Endothelial cell of umbilical vein (primary cell): ENCODE measurements at regions of chr1 and their contacts with region 1.

Region 1: DNA sequence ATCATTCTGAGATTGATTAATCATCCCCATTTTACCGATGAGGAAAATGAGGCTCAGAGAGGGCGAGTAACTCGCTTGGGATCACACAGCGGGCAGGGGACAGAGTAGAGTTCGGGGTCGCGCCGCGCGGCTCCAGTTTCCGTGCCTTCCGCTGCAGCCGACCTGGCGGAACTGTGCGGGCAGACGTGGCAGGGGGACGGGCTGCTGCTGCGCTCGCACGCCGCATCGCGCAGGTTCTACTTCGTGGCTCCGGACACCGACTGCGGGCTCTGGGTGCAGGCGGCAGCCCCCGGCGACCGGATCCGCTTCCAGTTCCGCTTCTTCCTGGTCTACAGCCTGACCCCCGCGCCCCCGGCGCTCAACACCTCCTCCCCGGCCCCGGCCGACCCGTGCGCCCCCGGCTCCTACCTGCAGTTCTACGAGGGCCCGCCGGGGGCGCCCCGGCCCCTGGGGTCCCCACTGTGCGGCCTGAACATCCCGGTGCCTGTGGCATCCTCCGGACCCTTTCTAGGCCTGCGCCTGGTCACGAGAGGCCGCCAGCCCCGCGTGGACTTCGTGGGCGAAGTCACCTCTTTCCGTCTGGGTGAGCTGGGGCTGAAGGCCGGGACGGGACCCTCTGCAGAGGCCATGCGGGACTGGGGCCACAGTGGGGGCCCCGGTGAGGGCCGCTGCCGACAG is 2.3 kb downstream of the LDLRAD2 start:
- DNase-seq: no peak
- H3K4me3 ChIP-seq: no peak overlapping the region
- H3K27ac ChIP-seq: no peak overlapping the region
- H3K4me1 ChIP-seq: peaks cover 29% of the 10 kb centered on the region
- H3K27me3 ChIP-seq: no peaks in the 10 kb centered on the region
- CTCF ChIP-seq: peak; percentile 48 to 71
- POLR2A ChIP-seq: no peak

Region 2: GRCh38 chr1:21703318-21703963 is 110.9 kb before region 1 on chr1:
- CTCF ChIA-PET with region 1: interaction called, 3 read pairs
- POLR2A ChIA-PET with region 1: interaction called, 5 read pairs
- dilution Hi-C with region 1: no loop called
- intact Hi-C with region 1: loop called (anchors 5 kb)
- DNase-seq: peak; percentile 72
- H3K4me3 ChIP-seq: no peak overlapping the region
- H3K27ac ChIP-seq: peak overlapping the region; percentile 28
- H3K4me1 ChIP-seq: peaks cover 20% of the 10 kb centered on the region
- H3K27me3 ChIP-seq: no peaks in the 10 kb centered on the region
- CTCF ChIP-seq: peak; percentile 42 to 46
- POLR2A ChIP-seq: no peak